ENCODE measurements at regions of chr2 and their contacts with region 1.

Region 1: DNA sequence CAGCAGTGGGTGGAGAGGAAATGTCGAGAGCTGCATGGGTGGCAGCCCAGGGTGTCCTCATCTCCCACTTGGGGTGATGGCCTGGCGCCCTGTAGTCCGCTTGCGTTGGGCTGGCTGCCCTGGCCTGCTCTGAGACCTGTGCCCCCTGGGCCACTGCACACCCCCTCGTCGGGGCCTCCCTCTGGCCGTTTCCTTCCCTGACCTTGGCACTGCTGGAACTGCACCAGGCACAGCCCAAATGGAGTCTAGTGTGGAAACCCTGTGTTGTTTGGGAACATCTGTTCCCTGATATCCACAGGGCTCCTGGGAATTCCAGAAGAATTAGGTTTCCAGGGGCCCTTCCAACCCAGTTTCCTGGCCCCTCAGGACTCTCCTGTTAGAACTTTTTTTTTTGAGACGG is 13.9 kb downstream of the EFHD1 start:
- DNase-seq: no peak
- ATAC-seq: no peak
- H3K4me3 ChIP-seq: no peak overlapping the region
- H3K27ac ChIP-seq: no peak overlapping the region
- H3K4me1 ChIP-seq: no peaks in the 10 kb centered on the region
- H3K27me3 ChIP-seq: no peaks in the 10 kb centered on the region
- CTCF ChIP-seq: no peak

Region 2: GRCh38 chr2:231883468-231883881 is 763.8 kb before region 1 on chr2:
- CTCF ChIA-PET with region 1: interaction called, 10 read pairs
- POLR2A ChIA-PET with region 1: no interaction called
- intact Hi-C with region 1: no loop called
- DNase-seq: no peak
- ATAC-seq: no peak
- H3K4me3 ChIP-seq: no peak overlapping the region
- H3K27ac ChIP-seq: no peak overlapping the region
- H3K4me1 ChIP-seq: no peaks in the 10 kb centered on the region
- H3K27me3 ChIP-seq: peaks cover 32% of the 10 kb centered on the region
- CTCF ChIP-seq: no peak

Region 3: DNA sequence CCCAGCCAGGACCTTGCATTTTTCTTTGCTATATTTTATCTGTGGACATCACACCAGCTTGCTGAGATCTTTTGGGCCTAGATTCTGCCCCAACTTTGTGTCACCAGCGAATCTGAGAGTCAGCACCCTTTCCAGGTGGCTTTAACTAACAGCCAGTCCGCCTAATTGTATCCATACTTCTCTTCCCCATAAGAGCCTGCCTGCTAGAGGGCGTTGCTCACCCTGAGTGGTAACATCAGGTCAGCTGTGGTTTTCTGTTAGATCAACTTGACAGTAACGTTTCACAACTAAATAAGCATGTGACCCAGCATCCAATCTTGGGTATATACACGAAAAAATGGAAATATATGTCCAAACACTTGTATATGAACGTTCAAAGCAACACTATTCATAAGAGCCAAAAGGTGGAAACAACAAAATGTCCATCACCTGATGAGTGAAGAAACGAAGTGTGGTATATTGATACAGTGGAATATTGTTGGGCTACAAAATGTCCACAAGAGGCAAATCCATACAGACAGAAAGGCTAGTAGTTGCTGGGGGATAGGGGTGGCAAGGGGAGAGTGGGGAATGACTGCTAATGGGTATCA is 11.0 kb after region 1 on chr2:
- CTCF ChIA-PET with region 1: no interaction called
- POLR2A ChIA-PET with region 1: no interaction called
- intact Hi-C with region 1: no loop called
- DNase-seq: peak; percentile 19
- ATAC-seq: peak; percentile 74
- H3K4me3 ChIP-seq: no peak overlapping the region
- H3K27ac ChIP-seq: no peak overlapping the region
- H3K4me1 ChIP-seq: no peaks in the 10 kb centered on the region
- H3K27me3 ChIP-seq: no peaks in the 10 kb centered on the region
- CTCF ChIP-seq: peak; percentile 56